ENCODE measurements at regions of chr6 and their contacts with region 1.

Region 1: DNA sequence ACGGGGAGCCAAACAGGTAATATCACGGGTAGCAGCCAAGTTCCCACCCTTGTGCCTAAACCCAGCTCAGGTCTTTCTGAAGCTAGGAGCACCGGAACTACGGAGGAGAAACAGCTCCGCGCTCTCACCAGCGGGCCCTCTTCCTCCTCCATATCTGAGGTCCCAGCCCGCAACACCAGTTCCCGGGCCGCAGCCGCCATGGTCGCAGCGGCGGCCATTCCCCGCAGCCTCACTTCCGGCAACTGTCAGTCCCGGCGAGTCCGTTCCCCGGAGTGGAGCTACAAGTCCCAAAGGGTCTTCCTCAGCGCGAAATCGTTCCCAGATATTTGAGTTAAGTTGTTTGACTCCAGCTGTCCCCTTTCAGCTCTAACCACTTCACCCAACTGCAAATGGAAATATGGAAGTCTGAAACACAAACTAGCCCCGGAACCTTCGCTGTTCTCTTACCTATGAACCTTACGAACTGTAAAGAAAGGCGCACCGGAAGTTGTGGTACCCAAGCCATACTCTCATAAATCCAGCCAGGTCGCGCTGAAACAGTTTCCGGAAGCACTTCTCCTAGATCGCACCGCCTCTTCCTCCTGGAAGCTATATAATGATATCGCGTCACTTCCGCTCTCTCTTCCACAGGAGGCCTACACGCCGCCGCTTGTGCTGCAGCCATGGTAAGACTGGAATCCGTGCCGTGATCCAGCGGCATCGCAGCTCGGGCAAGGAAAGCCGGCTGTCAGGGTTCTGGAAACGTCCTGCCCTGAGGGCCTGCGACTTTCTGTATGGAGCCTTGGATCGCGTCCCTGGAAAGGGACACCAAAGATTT is at the starts of genes RPS18 and VPS52:
- DNase-seq: peak; percentile 99
- H3K4me3 ChIP-seq: peak within 1 kb of the TSS; percentile 69 to 92 (median 72)
- H3K27ac ChIP-seq: peak within 1 kb of the TSS; percentile 87 to 96 (median 90)
- H3K4me1 ChIP-seq: peaks cover 50 to 65% (median 58%) of the 10 kb centered on the region in 4 donors
- H3K27me3 ChIP-seq: no peaks in the 10 kb centered on the region
- CTCF ChIP-seq: no peak
- EP300 ChIP-seq: no peak
- POLR2A ChIP-seq: peak; percentile 97
- total RNA-seq, gene RPS18: 1,642 to 3,082 (median 2,562) TPM
- total RNA-seq, gene VPS52: 22.5 to 34.9 (median 31.8) TPM

Region 2: GRCh38 chr6:33213166-33213988 is 58.3 kb before region 1 on chr6:
- intact Hi-C with region 1: loop called (anchors 5 kb)
- DNase-seq: no peak
- H3K4me3 ChIP-seq: peak overlapping the region; percentile 53 to 60 (median 56)
- H3K27ac ChIP-seq: peak overlapping the region in 3 of 4 donors; percentile 26 to 48 (median 34)
- H3K4me1 ChIP-seq: peaks cover 12 to 42% (median 27%) of the 10 kb centered on the region in 4 donors
- H3K27me3 ChIP-seq: no peaks in the 10 kb centered on the region
- CTCF ChIP-seq: no peak
- EP300 ChIP-seq: no peak
- POLR2A ChIP-seq: no peak

Region 3: GRCh38 chr6:33313709-33314514 is 42.2 kb after region 1 on chr6 and contains the start of gene TAPBP:
- intact Hi-C with region 1: loop called (anchors 5 kb)
- DNase-seq: no peak
- H3K4me3 ChIP-seq: peak within 1 kb of the TSS; percentile 59 to 96 (median 89)
- H3K27ac ChIP-seq: peak within 1 kb of the TSS; percentile 88 to 96 (median 96)
- H3K4me1 ChIP-seq: peaks cover 40 to 70% (median 61%) of the 10 kb centered on the region in 4 donors
- H3K27me3 ChIP-seq: no peaks in the 10 kb centered on the region
- CTCF ChIP-seq: no peak
- EP300 ChIP-seq: no peak
- POLR2A ChIP-seq: no peak
- total RNA-seq, gene TAPBP: 69.8 to 150 (median 86.6) TPM

Region 4: GRCh38 chr6:33324125-33324524 is 52.5 kb after region 1 on chr6:
- intact Hi-C with region 1: no loop called
- DNase-seq: no peak
- H3K4me3 ChIP-seq: peak overlapping the region; percentile 67 to 91 (median 78)
- H3K27ac ChIP-seq: peak overlapping the region; percentile 81 to 91 (median 88)
- H3K4me1 ChIP-seq: peaks cover 32 to 43% (median 40%) of the 10 kb centered on the region in 4 donors
- H3K27me3 ChIP-seq: no peaks in the 10 kb centered on the region
- CTCF ChIP-seq: no peak
- EP300 ChIP-seq: no peak
- POLR2A ChIP-seq: no peak